ENCODE measurements at regions of chr6 and their contacts with region 1.

Region 1: GRCh38 chr6:56693246-56693607 is 50.5 kb upstream of the DST start:
- DNase-seq: peak; percentile 90 to 95
- ATAC-seq: peak; percentile 80 to 91 (median 88)
- H3K4me3 ChIP-seq: peak overlapping the region; percentile 63
- H3K27ac ChIP-seq: peak overlapping the region; percentile 91
- H3K4me1 ChIP-seq: peaks cover 40% of the 10 kb centered on the region
- H3K27me3 ChIP-seq: no peaks in the 10 kb centered on the region
- CTCF ChIP-seq: no peak

Region 2: DNA sequence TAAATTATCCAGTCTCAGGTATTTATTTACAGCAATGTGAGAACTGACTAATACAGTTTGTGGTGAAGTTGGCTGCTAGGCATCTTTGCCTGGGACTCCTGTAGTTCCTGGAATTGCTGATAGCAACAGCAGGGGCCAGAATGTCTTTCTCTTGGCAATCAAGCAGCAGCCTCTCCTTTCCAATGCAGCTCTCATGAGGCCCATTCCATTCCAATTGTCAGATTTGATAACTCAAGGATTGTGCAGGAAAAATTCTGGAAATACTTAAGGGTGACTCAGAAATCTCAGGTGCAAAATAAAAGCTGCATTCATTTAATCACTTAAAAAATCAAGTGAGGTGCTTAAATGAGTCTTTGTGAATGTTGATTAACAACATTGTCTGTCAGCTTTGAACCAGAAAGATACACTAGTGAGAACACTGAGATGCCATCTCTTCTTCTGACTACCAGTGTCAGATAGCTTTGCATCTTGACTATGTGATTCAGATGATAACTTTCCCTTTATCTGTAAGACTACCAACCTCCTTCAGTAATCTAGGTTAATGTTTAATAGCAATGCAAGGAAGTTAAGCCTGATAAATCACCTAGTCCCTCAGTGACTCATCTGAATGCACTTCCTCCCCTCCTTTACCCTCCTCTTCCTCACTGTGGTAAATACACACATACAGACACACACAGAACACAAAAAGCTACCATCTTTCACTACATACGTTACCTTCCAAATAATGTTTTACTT is 413.7 kb before region 1 on chr6:
- intact Hi-C with region 1: no loop called
- DNase-seq: no peak
- ATAC-seq: no peak
- H3K4me3 ChIP-seq: no peak overlapping the region
- H3K27ac ChIP-seq: no peak overlapping the region
- H3K4me1 ChIP-seq: no peaks in the 10 kb centered on the region
- H3K27me3 ChIP-seq: no peaks in the 10 kb centered on the region
- CTCF ChIP-seq: no peak

Region 3: GRCh38 chr6:56659721-56660380 is 33.4 kb before region 1 on chr6:
- intact Hi-C with region 1: loop called (anchors 5 kb)
- DNase-seq: no peak
- ATAC-seq: peak; percentile 50 to 65 (median 60)
- H3K4me3 ChIP-seq: no peak overlapping the region
- H3K27ac ChIP-seq: peak overlapping the region; percentile 61
- H3K4me1 ChIP-seq: peaks cover 45% of the 10 kb centered on the region
- H3K27me3 ChIP-seq: no peaks in the 10 kb centered on the region
- CTCF ChIP-seq: no peak